Activated naive CD4-positive, alpha-beta T cell treated with anti-CD3 and anti-CD28 coated beads for 36 hours (primary cell): ENCODE measurements at regions of chr6 and their contacts with region 1.

Region 1: GRCh38 chr6:125956506-125957390 is at the start of gene HINT3:
- DNase-seq: peak; percentile 99
- H3K4me3 Mint-ChIP-seq: no peak within 1 kb of the TSS
- H3K27ac Mint-ChIP-seq: peak within 1 kb of the TSS; percentile 72
- H3K4me1 Mint-ChIP-seq: peaks cover 9% of the 10 kb centered on the region
- H3K27me3 Mint-ChIP-seq: peaks cover 2% of the 10 kb centered on the region
- total RNA-seq, gene HINT3: 10.6 to 10.9 TPM

Region 2: GRCh38 chr6:125670568-125670967 is 286.2 kb before region 1 on chr6:
- CTCF ChIA-PET with region 1: no interaction called
- intact Hi-C with region 1: no loop called
- DNase-seq: no peak
- H3K4me3 Mint-ChIP-seq: no peak overlapping the region
- H3K27ac Mint-ChIP-seq: no peak overlapping the region
- H3K4me1 Mint-ChIP-seq: no peaks in the 10 kb centered on the region
- H3K27me3 Mint-ChIP-seq: peaks cover 13% of the 10 kb centered on the region

Region 3: GRCh38 chr6:125749173-125749864 is 207.4 kb before region 1 on chr6 and contains the start of gene HEY2:
- CTCF ChIA-PET with region 1: no interaction called
- intact Hi-C with region 1: loop called (anchors 1 kb)
- DNase-seq: peak; percentile 83
- H3K4me3 Mint-ChIP-seq: peak within 1 kb of the TSS; percentile 79
- H3K27ac Mint-ChIP-seq: no peak within 1 kb of the TSS
- H3K4me1 Mint-ChIP-seq: peaks cover 33% of the 10 kb centered on the region
- H3K27me3 Mint-ChIP-seq: peaks cover 51% of the 10 kb centered on the region
- total RNA-seq, gene HEY2: not detected

Region 4: DNA sequence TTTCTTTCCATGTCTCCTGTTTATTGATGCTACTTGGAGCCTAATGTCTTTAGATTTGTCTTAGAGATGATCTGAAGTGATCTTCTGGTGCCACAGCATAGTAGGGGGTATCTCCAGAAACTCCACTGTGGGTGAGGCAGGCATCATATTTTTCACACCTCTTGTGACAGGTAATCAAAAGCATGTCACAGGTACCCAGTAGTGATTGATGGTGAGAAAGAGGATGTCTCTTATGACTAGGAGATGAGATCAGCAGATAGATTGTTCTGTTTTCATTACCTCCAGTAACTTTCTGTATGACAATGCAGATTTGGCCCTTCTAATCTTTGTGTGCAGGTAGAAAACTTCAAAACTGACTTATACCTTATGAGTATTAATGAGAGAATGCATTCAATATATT is 152.5 kb before region 1 on chr6:
- CTCF ChIA-PET with region 1: interaction called, 8 read pairs
- intact Hi-C with region 1: loop called (anchors 1 kb)
- DNase-seq: peak; percentile 67
- H3K4me3 Mint-ChIP-seq: no peak overlapping the region
- H3K27ac Mint-ChIP-seq: no peak overlapping the region
- H3K4me1 Mint-ChIP-seq: peaks cover 63% of the 10 kb centered on the region
- H3K27me3 Mint-ChIP-seq: no peaks in the 10 kb centered on the region

Region 5: DNA sequence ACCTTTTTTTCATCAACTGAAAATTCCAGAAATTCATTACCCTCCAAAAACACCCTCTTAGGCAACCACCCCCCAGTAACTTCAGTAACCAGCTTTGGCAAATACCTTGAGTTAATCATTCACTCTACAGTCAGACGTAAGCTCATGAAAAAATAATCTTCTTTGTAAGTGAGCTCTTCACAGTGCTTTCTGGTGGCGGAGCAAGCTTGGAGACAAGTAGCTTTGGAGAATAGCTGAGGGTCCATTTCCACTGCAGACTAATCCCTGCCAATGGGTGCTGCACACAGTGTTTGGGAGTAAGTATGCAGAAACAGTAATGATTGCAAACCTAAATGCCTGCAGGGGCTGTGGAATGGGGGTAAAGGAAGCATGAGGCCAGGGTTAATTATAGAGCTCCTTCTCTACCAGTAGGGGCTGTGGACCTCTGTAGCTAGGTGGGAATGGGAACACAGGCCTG is 57.0 kb before region 1 on chr6:
- CTCF ChIA-PET with region 1: interaction called, 27 read pairs
- intact Hi-C with region 1: no loop called
- DNase-seq: no peak
- H3K4me3 Mint-ChIP-seq: no peak overlapping the region
- H3K27ac Mint-ChIP-seq: no peak overlapping the region
- H3K4me1 Mint-ChIP-seq: peaks cover 5% of the 10 kb centered on the region
- H3K27me3 Mint-ChIP-seq: no peaks in the 10 kb centered on the region

Region 6: GRCh38 chr6:125918681-125919566 is 37.8 kb before region 1 on chr6:
- CTCF ChIA-PET with region 1: interaction called, 34 read pairs
- intact Hi-C with region 1: loop called (anchors 1 kb)
- DNase-seq: peak; percentile 73
- H3K4me3 Mint-ChIP-seq: peak overlapping the region; percentile 78
- H3K27ac Mint-ChIP-seq: peak overlapping the region; percentile 94
- H3K4me1 Mint-ChIP-seq: peaks cover 33% of the 10 kb centered on the region
- H3K27me3 Mint-ChIP-seq: no peaks in the 10 kb centered on the region

Region 7: GRCh38 chr6:125986300-125987025 is 29.7 kb after region 1 on chr6 and contains the start of gene TRMT11:
- CTCF ChIA-PET with region 1: interaction called, 14 read pairs
- intact Hi-C with region 1: loop called (anchors 1 kb)
- DNase-seq: peak; percentile 84
- H3K4me3 Mint-ChIP-seq: peak within 1 kb of the TSS; percentile 28
- H3K27ac Mint-ChIP-seq: no peak within 1 kb of the TSS
- H3K4me1 Mint-ChIP-seq: peaks cover 11% of the 10 kb centered on the region
- H3K27me3 Mint-ChIP-seq: no peaks in the 10 kb centered on the region
- total RNA-seq, gene TRMT11: 40.6 to 41.9 TPM

Region 8: DNA sequence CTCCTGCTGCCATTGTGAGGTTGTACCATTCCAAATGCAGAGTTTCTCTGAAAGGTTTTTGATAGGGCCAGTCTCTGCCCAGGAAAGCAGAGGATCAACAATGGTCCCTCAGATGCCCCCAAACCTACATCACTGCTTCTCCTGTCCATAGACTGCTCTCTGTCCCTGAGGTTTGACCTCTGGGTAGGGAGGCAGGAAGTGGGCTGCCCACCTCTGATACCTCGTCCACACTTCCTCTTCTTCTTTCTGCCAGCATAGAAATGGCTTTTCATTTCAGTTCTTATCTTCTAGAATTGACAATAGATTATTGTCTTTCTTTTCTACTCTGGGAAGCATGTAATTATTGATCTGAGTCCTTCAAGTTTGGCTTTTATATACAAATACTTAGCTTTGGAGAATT is 200.2 kb after region 1 on chr6:
- CTCF ChIA-PET with region 1: no interaction called
- intact Hi-C with region 1: no loop called
- DNase-seq: no peak
- H3K4me3 Mint-ChIP-seq: no peak overlapping the region
- H3K27ac Mint-ChIP-seq: no peak overlapping the region
- H3K4me1 Mint-ChIP-seq: no peaks in the 10 kb centered on the region
- H3K27me3 Mint-ChIP-seq: no peaks in the 10 kb centered on the region